Calu3 (cell line): ENCODE measurements at regions of chr7 and their contacts with region 1.

Region 1: DNA sequence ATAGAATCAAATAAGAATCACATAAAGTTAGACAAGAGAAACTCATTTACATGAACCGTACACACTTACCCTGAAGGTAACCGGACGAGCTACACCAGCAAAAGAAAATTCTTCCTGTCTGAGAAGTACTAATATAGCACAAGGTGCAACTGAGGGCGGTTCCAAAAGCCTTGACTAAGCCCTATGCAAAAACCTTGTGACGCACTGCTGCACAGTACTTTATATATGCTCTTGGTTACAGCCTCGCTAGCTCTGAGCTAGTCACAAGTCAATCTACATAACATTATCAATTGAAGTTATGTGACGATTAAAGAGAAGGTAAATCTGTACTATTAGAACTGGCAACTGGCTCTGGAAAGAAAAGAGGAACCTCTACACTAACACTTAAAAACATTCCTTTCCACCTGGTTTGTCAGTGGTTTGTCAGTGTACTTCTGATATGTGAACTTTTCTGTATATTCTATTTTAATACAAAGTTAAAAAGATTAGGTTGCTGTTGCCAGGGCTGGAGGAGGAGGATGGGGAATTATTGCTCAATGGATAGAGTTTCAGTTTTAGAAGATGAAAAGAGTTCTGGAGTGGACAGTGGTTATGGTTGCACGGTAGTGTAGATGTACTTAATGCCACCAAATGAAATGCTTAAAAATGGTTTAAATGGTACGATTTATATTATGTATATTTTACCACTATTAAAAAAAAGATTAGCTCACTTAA is 21.6 kb downstream of the NT5C3A start:
- DNase-seq: peak; percentile 77
- H3K4me3 Mint-ChIP-seq: peak overlapping the region; percentile 67
- H3K27ac Mint-ChIP-seq: peak overlapping the region; percentile 79
- H3K4me1 Mint-ChIP-seq: peaks cover 53% of the 10 kb centered on the region
- H3K27me3 Mint-ChIP-seq: no peaks in the 10 kb centered on the region
- CTCF ChIP-seq: no peak

Region 2: DNA sequence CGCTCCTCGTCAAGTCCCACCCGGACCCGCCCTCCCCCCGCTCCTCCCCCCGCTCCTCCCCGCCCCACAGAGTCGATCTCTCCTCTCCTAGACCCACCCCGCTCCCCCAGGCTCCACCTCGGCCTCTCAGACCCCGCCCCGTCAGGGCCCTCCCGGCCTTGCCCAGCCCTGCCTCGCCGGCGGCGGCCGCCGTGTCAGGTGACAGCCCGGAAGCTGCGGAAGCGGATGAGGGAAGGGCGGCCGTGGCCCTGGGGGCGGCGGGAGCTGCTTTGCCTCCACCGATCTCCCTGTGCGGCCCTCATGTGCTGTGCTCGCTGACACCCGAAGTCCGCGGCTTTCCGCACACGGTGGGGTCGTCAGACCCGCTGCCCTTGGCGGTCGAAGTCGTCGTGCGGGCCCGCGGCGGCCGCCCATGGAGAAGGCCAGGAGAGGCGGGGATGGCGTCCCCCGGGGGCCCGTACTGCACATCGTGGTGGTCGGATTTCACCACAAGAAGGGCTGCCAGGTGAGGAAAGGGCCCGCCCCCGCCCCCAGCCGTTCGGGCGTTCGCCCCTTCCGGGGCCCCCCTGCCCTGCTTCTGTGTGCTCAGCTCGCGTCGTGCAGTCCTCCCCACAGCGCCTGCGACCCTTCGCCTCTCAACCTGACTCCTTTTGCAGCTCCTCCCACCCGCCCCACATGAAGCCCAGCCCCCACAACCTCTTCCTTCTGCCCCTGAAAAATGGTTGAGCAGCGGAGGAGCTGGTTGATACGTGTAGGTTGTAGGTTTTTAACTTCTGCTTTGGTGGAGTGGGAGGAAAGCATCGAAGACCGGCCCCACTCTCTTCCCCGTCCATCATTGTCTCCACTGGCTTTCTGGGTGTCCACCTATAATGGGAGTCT is 545.4 kb before region 1 on chr7 and contains the start of gene AVL9:
- CTCF ChIA-PET with region 1: no interaction called
- intact Hi-C with region 1: loop called (anchors 10 kb)
- DNase-seq: peak; percentile 100
- H3K4me3 Mint-ChIP-seq: peak within 1 kb of the TSS; percentile 80
- H3K27ac Mint-ChIP-seq: peak within 1 kb of the TSS; percentile 86
- H3K4me1 Mint-ChIP-seq: peaks cover 7% of the 10 kb centered on the region
- H3K27me3 Mint-ChIP-seq: no peaks in the 10 kb centered on the region
- CTCF ChIP-seq: no peak
- total RNA-seq, gene AVL9: 86.1 and 86.6 TPM in 2 replicates

Region 3: GRCh38 chr7:32846701-32847100 is 194.3 kb before region 1 on chr7:
- CTCF ChIA-PET with region 1: no interaction called
- intact Hi-C with region 1: no loop called
- DNase-seq: peak; percentile 96
- H3K4me3 Mint-ChIP-seq: no peak overlapping the region
- H3K27ac Mint-ChIP-seq: no peak overlapping the region
- H3K4me1 Mint-ChIP-seq: no peaks in the 10 kb centered on the region
- H3K27me3 Mint-ChIP-seq: no peaks in the 10 kb centered on the region
- CTCF ChIP-seq: peak; percentile 98

Region 4: DNA sequence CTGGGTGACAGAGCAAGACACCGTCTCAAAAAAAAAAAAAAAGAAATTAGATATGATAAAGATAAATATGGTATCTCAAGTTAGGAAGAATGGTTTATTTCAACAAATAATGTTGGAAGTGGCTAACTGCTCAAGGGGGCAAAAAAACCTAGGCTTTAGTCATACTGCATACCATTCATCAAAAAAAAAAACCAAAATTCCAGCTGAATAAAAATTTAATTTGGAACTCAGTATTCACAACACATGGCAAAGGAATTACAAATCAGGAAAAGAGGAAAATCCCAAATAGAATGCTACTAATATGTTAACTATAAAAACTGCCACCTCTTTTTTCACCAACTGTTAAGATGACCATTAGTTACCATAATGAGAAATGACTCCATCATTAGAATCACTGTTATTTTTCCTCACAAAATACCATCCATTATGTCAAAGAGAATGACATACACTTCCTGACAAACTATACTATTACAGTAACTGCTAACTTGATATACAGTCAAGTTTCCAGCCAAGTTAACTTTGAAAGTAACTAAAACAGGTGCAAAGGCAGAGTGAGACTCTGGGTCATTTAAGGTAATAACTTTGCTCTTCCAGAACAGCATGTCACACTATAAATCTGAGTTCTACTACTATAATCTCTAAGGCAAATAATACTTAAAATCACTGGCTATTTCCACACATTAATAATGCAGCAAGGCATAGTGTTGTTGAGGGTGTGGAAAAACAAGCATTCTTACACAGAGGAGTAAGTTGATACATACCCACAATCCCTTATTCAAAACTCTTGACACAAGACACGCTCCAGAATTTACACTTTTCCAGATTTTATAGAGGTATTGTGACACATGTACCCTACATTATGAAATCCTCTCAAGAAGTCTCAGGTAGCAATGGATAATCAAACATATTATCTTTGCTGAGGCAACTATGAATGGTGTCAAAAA is 159.6 kb before region 1 on chr7:
- CTCF ChIA-PET with region 1: no interaction called
- intact Hi-C with region 1: loop called (anchors 5 kb)
- DNase-seq: no peak
- H3K4me3 Mint-ChIP-seq: no peak overlapping the region
- H3K27ac Mint-ChIP-seq: peak overlapping the region; percentile 34
- H3K4me1 Mint-ChIP-seq: peaks cover 41% of the 10 kb centered on the region
- H3K27me3 Mint-ChIP-seq: no peaks in the 10 kb centered on the region
- CTCF ChIP-seq: no peak

Region 5: GRCh38 chr7:32942786-32943653 is 97.9 kb before region 1 on chr7:
- CTCF ChIA-PET with region 1: interaction called, 4 read pairs
- intact Hi-C with region 1: loop called (anchors 2 kb)
- DNase-seq: peak; percentile 94
- H3K4me3 Mint-ChIP-seq: peak overlapping the region; percentile 91
- H3K27ac Mint-ChIP-seq: no peak overlapping the region
- H3K4me1 Mint-ChIP-seq: peaks cover 22% of the 10 kb centered on the region
- H3K27me3 Mint-ChIP-seq: no peaks in the 10 kb centered on the region
- CTCF ChIP-seq: peak; percentile 68

Region 6: GRCh38 chr7:33062782-33063443 is 22.0 kb after region 1 on chr7:
- CTCF ChIA-PET with region 1: interaction called, 9 read pairs
- intact Hi-C with region 1: loop called (anchors 2 kb)
- DNase-seq: peak; percentile 98
- H3K4me3 Mint-ChIP-seq: peak overlapping the region; percentile 93
- H3K27ac Mint-ChIP-seq: peak overlapping the region; percentile 61
- H3K4me1 Mint-ChIP-seq: peaks cover 28% of the 10 kb centered on the region
- H3K27me3 Mint-ChIP-seq: no peaks in the 10 kb centered on the region
- CTCF ChIP-seq: no peak

Region 7: GRCh38 chr7:33310541-33310940 is 269.6 kb after region 1 on chr7:
- CTCF ChIA-PET with region 1: no interaction called
- intact Hi-C with region 1: no loop called
- DNase-seq: no peak
- H3K4me3 Mint-ChIP-seq: no peak overlapping the region
- H3K27ac Mint-ChIP-seq: no peak overlapping the region
- H3K4me1 Mint-ChIP-seq: no peaks in the 10 kb centered on the region
- H3K27me3 Mint-ChIP-seq: no peaks in the 10 kb centered on the region
- CTCF ChIP-seq: no peak